MCF 10A (cell line): ENCODE measurements at regions of chr14 and their contacts with region 1.

Region 1: GRCh38 chr14:21455911-21456667 is at the start of gene CHD8:
- DNase-seq: peak; percentile 100
- H3K4me3 Mint-ChIP-seq: peak within 1 kb of the TSS; percentile 92
- H3K27ac Mint-ChIP-seq: peak within 1 kb of the TSS; percentile 98
- H3K4me1 Mint-ChIP-seq: peaks cover 16% of the 10 kb centered on the region
- H3K27me3 Mint-ChIP-seq: no peaks in the 10 kb centered on the region
- CTCF ChIP-seq: peak; percentile 40
- total RNA-seq, gene CHD8: 70.7 and 78.1 TPM in 2 replicates

Region 2: GRCh38 chr14:21383848-21384493 is 72.1 kb before region 1 on chr14 and contains the start of gene SUPT16H:
- CTCF ChIA-PET with region 1: no interaction called
- POLR2A ChIA-PET with region 1: interaction called, 10 read pairs
- intact Hi-C with region 1: loop called (anchors 5 kb)
- DNase-seq: peak; percentile 95
- H3K4me3 Mint-ChIP-seq: peak within 1 kb of the TSS; percentile 100
- H3K27ac Mint-ChIP-seq: peak within 1 kb of the TSS; percentile 99
- H3K4me1 Mint-ChIP-seq: peaks cover 8% of the 10 kb centered on the region
- H3K27me3 Mint-ChIP-seq: no peaks in the 10 kb centered on the region
- CTCF ChIP-seq: no peak
- total RNA-seq, gene SUPT16H: 97.0 and 98.3 TPM in 2 replicates

Region 3: GRCh38 chr14:21431126-21431525 is 25.0 kb before region 1 on chr14:
- CTCF ChIA-PET with region 1: interaction called, 60 read pairs
- POLR2A ChIA-PET with region 1: interaction called, 138 read pairs
- intact Hi-C with region 1: loop called (anchors 2 kb)
- DNase-seq: no peak
- H3K4me3 Mint-ChIP-seq: no peak overlapping the region
- H3K27ac Mint-ChIP-seq: no peak overlapping the region
- H3K4me1 Mint-ChIP-seq: peaks cover 14% of the 10 kb centered on the region
- H3K27me3 Mint-ChIP-seq: no peaks in the 10 kb centered on the region
- CTCF ChIP-seq: no peak

Region 4: DNA sequence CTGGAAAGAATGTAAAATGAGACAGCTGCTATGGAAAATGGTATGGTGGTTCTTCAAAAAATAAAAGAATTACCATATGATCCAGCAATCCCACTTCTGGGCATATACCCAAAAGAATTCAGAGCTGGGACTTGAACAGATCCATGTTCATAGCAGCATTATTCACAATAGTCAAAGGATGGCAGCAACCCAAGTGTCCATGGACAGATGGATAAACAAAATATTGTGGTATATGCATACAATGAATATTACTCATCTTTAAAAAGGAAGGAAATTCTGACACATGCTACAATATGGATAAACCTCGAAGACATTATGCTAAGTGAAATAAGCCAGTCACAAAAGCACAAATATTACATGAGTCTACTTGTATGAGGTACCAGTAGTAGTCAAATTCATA is 11.5 kb after region 1 on chr14:
- CTCF ChIA-PET with region 1: interaction called, 38 read pairs
- POLR2A ChIA-PET with region 1: interaction called, 10 read pairs
- intact Hi-C with region 1: no loop called
- DNase-seq: peak; percentile 49
- H3K4me3 Mint-ChIP-seq: no peak overlapping the region
- H3K27ac Mint-ChIP-seq: no peak overlapping the region
- H3K4me1 Mint-ChIP-seq: no peaks in the 10 kb centered on the region
- H3K27me3 Mint-ChIP-seq: no peaks in the 10 kb centered on the region
- CTCF ChIP-seq: no peak

Region 5: DNA sequence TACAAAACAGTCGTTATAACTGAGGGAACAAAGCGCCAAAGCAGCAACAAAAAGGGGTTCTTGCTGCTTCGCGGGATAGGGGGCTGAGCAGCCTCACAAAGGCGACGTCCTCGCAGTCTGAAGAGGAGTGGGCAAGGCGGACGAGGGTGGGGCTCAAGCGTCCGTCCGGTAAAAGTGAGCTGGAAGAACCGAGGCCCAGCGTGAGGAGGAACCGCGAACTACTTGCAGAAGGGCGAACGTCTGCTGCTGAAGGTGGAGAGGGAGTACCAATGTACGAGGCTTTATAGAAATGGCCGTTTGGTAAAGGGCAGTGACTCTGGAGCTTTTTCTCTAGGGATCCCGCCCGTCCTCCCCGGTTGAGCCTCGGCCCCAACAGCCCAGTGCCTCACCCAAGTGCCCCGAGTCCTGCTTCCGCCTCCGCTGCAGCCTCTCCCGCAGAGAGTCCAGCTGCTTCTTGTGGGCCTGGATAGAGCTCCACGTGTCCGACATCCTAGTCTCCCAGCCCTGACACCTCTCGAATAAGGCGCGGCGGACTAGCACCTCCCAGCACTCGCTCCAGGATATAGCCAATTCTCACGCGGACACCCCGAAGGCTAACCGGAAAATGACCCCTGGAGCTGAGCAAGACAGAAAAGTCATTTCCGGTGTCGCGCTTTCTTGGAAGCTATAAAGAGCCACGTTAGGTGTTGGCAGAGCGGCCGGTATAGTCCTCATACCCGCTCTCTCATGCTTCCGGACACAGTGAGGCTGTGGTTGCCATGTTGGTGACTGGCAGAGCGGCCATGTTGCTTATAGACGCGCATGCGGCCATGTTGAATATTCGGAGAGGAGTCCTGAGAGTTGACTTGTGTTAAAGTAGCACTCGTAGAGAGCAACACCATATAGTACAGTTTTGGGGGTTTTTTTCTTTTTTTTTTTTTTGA is 54.9 kb after region 1 on chr14 and contains the start of gene METTL3:
- CTCF ChIA-PET with region 1: interaction called, 6 read pairs
- POLR2A ChIA-PET with region 1: interaction called, 15 read pairs
- intact Hi-C with region 1: loop called (anchors 1 kb)
- DNase-seq: peak; percentile 99
- H3K4me3 Mint-ChIP-seq: peak within 1 kb of the TSS; percentile 96
- H3K27ac Mint-ChIP-seq: peak within 1 kb of the TSS; percentile 95
- H3K4me1 Mint-ChIP-seq: peaks cover 13% of the 10 kb centered on the region
- H3K27me3 Mint-ChIP-seq: no peaks in the 10 kb centered on the region
- CTCF ChIP-seq: no peak
- total RNA-seq, gene METTL3: 36.4 and 46.7 TPM in 2 replicates

Region 6: GRCh38 chr14:21894003-21894897 is 438.2 kb after region 1 on chr14:
- CTCF ChIA-PET with region 1: no interaction called
- POLR2A ChIA-PET with region 1: no interaction called
- intact Hi-C with region 1: no loop called
- DNase-seq: peak; percentile 21
- H3K4me3 Mint-ChIP-seq: no peak overlapping the region
- H3K27ac Mint-ChIP-seq: no peak overlapping the region
- H3K4me1 Mint-ChIP-seq: no peaks in the 10 kb centered on the region
- H3K27me3 Mint-ChIP-seq: peaks cover 70% of the 10 kb centered on the region
- CTCF ChIP-seq: peak; percentile 26

Region 7: GRCh38 chr14:22024137-22024536 is 568.0 kb after region 1 on chr14:
- CTCF ChIA-PET with region 1: no interaction called
- POLR2A ChIA-PET with region 1: no interaction called
- intact Hi-C with region 1: no loop called
- DNase-seq: no peak
- H3K4me3 Mint-ChIP-seq: no peak overlapping the region
- H3K27ac Mint-ChIP-seq: no peak overlapping the region
- H3K4me1 Mint-ChIP-seq: no peaks in the 10 kb centered on the region
- H3K27me3 Mint-ChIP-seq: peaks cover 99% of the 10 kb centered on the region
- CTCF ChIP-seq: no peak